Activated naive CD4-positive, alpha-beta T cell treated with anti-CD3 and anti-CD28 coated beads, Interleukin-2, amount 10 ng/mL, durations not matched to agents 7 days and 5 days (primary cell): ENCODE measurements at regions of chr20 and their contacts with region 1.

Region 1: GRCh38 chr20:49846206-49846807 is 33.7 kb downstream of the SLC9A8 start:
- DNase-seq: peak; percentile 65
- H3K4me3 Mint-ChIP-seq: no peak overlapping the region
- H3K27ac Mint-ChIP-seq: no peak overlapping the region
- H3K4me1 Mint-ChIP-seq: peaks cover 26% of the 10 kb centered on the region
- H3K27me3 Mint-ChIP-seq: no peaks in the 10 kb centered on the region

Region 2: GRCh38 chr20:49541733-49542513 is 304.4 kb before region 1 on chr20:
- CTCF ChIA-PET with region 1: interaction called, 31 read pairs
- DNase-seq: peak; percentile 83
- H3K4me3 Mint-ChIP-seq: no peak overlapping the region
- H3K27ac Mint-ChIP-seq: peak overlapping the region; percentile 31
- H3K4me1 Mint-ChIP-seq: peaks cover 17% of the 10 kb centered on the region
- H3K27me3 Mint-ChIP-seq: peaks cover 54% of the 10 kb centered on the region

Region 3: DNA sequence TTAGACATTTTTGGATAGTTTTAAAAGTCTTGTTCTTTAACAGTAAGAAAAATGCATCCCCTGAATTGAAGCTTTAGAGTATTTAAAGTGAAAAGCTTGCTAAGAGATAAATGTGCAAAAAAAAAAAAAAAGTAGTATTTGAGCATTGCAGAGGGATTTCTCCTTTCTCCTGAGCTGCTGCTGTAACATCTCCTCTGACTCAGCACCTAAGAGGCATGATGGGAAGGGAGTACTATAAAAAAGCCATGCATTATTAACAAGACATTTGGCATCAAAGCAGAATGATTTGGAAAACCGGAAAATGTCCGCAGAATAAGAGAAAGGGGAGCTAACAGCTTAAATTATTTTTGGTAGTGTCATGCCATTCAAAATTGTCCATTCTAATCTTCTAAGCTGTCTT is 160.5 kb before region 1 on chr20:
- CTCF ChIA-PET with region 1: no interaction called
- DNase-seq: no peak
- H3K4me3 Mint-ChIP-seq: no peak overlapping the region
- H3K27ac Mint-ChIP-seq: no peak overlapping the region
- H3K4me1 Mint-ChIP-seq: peaks cover 7% of the 10 kb centered on the region
- H3K27me3 Mint-ChIP-seq: no peaks in the 10 kb centered on the region

Region 4: GRCh38 chr20:49888345-49888966 is 42.1 kb after region 1 on chr20:
- CTCF ChIA-PET with region 1: interaction called, 11 read pairs
- DNase-seq: peak; percentile 66
- H3K4me3 Mint-ChIP-seq: no peak overlapping the region
- H3K27ac Mint-ChIP-seq: no peak overlapping the region
- H3K4me1 Mint-ChIP-seq: peaks cover 4% of the 10 kb centered on the region
- H3K27me3 Mint-ChIP-seq: no peaks in the 10 kb centered on the region